Posterior vena cava (tissue), 2 donors: ENCODE measurements at regions of chr2 and their contacts with region 1.

Region 1: DNA sequence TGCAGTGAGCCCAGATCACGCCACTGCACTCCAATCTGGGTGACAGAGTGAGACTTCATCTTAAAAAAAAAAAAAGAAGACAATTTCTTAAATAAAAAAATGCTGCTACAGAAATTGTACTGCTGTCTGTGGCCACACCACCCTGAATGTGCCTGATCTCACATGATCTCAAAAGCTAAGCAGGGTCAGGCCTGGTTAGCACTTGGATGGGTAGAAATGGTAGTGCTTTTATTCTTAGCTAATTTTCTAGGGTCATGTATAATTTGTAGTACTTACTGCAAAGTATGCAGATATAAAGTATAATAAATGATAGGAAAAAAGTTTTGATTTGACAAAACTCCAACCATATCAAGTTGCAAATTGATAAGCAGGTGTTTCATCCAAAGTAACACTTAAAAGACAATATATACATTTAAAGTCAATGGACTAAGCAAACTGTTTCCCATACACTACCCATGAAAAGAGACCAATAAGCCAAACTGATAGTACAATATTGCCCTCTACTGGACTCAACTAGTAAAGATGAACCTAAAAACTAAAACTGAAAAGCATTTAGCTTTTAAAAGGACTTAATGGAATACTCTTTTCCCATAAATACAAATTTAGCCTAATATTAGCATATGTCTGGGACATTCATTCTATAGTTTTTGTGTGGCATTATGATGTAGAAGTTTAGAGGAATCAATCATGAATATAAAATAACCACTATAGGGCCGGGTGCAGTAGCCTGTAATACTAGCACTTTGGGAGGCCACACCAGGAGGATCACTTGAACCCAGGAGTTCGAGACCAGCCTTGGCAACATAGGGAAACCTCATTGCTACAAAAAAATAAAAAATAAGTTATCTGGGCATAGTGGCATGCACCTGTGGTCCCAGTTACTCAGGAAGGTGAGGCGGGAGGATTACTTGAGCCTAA is 18.6 kb upstream of the PEX13 start:
- DNase-seq: no peak

Region 2: DNA sequence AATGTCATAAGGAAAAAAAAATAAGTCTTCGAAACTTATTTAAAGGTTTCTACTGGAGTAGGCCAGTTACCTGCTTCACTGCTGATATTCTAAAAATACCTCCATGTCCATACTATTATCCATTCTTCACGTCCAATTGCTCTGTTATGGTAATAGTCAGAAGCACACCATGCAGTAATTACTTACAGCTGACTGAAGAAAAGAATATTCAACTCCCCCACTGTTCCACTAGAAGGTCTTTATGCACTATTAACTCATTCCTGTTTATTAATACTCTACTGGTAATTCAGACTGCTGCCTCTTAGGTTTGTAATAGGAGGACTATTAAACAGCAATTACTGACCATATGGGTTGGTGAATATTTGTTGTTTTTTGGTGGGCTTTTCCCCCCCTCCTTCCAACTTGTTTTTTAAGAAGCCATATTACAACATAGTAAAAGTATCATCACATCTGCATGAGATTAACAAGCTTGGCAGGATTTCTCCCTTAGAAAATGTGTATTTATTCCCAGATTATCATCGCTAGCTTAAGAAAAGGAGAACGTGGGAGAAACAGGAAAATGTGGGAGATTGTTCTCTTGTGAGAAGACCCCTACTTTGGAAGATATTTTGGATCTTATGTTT is 1951.4 kb before region 1 on chr2:
- intact Hi-C with region 1: loop called in 1 of 2 experiments (anchors 10 kb)
- DNase-seq: no peak

Region 3: DNA sequence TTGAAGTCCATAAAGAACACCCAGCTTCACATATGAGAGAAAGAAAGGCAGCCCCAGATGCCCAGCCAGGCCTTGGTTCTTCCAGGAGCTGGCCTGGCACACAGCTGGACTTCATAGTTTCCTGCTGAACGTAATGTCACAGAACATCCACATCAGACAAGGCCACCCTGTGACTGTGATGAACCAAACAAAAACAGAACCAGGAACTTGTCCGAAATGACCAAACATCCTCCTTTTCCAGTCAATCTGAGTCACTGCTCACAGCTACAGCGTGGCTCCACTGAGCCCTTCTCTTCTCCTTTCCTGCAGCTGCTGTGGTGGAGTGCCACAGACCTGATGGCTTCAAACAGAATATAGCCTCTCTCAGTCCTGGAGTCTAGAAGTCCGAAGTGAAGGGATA is 288.2 kb before region 1 on chr2:
- intact Hi-C with region 1: loop called in 1 of 2 experiments (anchors 10 kb)
- DNase-seq: no peak